ENCODE measurements at regions of chr10 and their contacts with region 1.

Region 1: DNA sequence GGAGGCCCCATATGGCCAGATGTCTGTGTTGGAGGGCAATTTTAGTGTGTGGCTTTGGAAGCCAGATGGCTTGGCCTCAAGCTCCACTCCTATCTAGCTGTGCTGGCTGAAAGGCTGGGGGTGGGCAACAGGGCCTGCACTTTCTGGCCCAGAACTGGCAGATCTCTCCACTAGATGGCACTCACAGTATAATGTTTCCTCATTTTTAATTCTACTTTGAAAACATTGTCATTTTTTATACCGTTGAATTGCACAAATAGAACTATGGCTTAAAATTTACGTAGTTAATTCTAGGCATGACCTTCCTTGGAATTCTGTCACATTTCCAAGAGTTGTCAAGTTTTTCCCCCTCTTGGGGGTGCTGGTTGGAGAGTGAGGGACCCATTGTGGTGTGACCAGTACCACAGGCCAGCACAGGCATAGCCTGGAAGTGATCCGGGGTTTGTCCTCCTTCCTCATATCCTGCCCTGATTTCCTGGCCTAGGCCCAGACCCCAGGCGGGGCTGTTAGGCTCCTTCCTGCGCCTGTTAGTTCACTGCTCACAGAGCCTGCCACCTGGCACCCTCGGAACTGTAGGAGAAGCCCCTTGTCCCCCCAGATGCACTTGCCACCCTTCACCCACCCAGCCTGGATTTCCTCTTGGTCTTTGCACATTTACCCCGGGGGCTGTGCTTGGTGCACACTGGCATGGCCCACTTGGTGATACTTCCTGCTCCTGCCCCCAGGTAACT is 52.8 kb downstream of the ARHGAP22 start:
- DNase-seq: peak; percentile 25
- H3K4me3 Mint-ChIP-seq: no peak overlapping the region
- H3K27ac Mint-ChIP-seq: no peak overlapping the region
- H3K4me1 Mint-ChIP-seq: no peaks in the 10 kb centered on the region
- H3K27me3 Mint-ChIP-seq: peaks cover 41% of the 10 kb centered on the region
- CTCF ChIP-seq: peak; percentile 52

Region 2: DNA sequence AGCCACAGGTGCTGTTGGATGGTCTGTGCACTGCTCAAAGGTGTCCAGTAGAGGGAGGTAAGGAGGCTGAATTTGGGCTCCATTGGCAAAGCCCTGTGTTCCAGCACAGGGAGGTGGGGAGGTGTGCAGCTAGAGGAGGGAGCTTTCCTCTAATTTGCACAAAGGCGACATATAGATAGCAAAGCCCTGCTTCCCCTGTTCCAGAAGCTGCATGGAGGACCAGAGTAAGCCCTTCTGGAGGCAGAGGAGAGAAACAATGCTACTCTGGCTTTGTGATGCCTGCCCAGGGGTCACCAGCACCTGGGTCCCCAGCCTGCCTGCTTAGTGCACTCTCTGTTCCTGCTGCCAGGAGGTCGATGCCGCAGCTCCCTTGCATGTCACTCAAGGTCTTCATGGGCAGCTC is 56.3 kb after region 1 on chr10:
- CTCF ChIA-PET with region 1: interaction called, 3 read pairs
- intact Hi-C with region 1: loop called (anchors 5 kb)
- DNase-seq: peak; percentile 54
- H3K4me3 Mint-ChIP-seq: no peak overlapping the region
- H3K27ac Mint-ChIP-seq: no peak overlapping the region
- H3K4me1 Mint-ChIP-seq: no peaks in the 10 kb centered on the region
- H3K27me3 Mint-ChIP-seq: peaks cover 86% of the 10 kb centered on the region
- CTCF ChIP-seq: peak; percentile 67

Region 3: GRCh38 chr10:48671914-48672595 is 120.0 kb after region 1 on chr10:
- CTCF ChIA-PET with region 1: no interaction called
- intact Hi-C with region 1: no loop called
- DNase-seq: no peak
- H3K4me3 Mint-ChIP-seq: no peak overlapping the region
- H3K27ac Mint-ChIP-seq: no peak overlapping the region
- H3K4me1 Mint-ChIP-seq: no peaks in the 10 kb centered on the region
- H3K27me3 Mint-ChIP-seq: no peaks in the 10 kb centered on the region
- CTCF ChIP-seq: no peak

Region 4: GRCh38 chr10:48691812-48692528 is 139.9 kb after region 1 on chr10:
- CTCF ChIA-PET with region 1: no interaction called
- intact Hi-C with region 1: no loop called
- DNase-seq: no peak
- H3K4me3 Mint-ChIP-seq: no peak overlapping the region
- H3K27ac Mint-ChIP-seq: no peak overlapping the region
- H3K4me1 Mint-ChIP-seq: no peaks in the 10 kb centered on the region
- H3K27me3 Mint-ChIP-seq: peaks cover 55% of the 10 kb centered on the region
- CTCF ChIP-seq: no peak